PC-3 (cell line): ENCODE measurements at regions of chr1 and their contacts with region 1.

Region 1: GRCh38 chr1:156751758-156752757 is 583 bp upstream of the HDGF start:
- DNase-seq: peak; percentile 98
- ATAC-seq: peak; percentile 53
- H3K4me3 ChIP-seq: peak overlapping the region; percentile 86
- H3K27ac ChIP-seq: peak overlapping the region; percentile 60
- H3K4me1 ChIP-seq: peaks cover 41% of the 10 kb centered on the region
- H3K27me3 ChIP-seq: no peaks in the 10 kb centered on the region
- CTCF ChIP-seq: no peak

Region 2: GRCh38 chr1:156524481-156524869 is 227.6 kb before region 1 on chr1:
- CTCF ChIA-PET with region 1: no interaction called
- POLR2A ChIA-PET with region 1: interaction called, 12 read pairs
- intact Hi-C with region 1: no loop called
- DNase-seq: no peak
- ATAC-seq: no peak
- H3K4me3 ChIP-seq: no peak overlapping the region
- H3K27ac ChIP-seq: no peak overlapping the region
- H3K4me1 ChIP-seq: no peaks in the 10 kb centered on the region
- H3K27me3 ChIP-seq: no peaks in the 10 kb centered on the region
- CTCF ChIP-seq: no peak

Region 3: GRCh38 chr1:156767101-156767878 is 15.2 kb after region 1 on chr1 and contains the start of gene PRCC:
- CTCF ChIA-PET with region 1: no interaction called
- POLR2A ChIA-PET with region 1: interaction called, 7 read pairs
- intact Hi-C with region 1: loop called (anchors 1 kb)
- DNase-seq: peak; percentile 100
- ATAC-seq: peak; percentile 93
- H3K4me3 ChIP-seq: peak within 1 kb of the TSS; percentile 74
- H3K27ac ChIP-seq: peak within 1 kb of the TSS; percentile 74
- H3K4me1 ChIP-seq: peaks cover 31% of the 10 kb centered on the region
- H3K27me3 ChIP-seq: no peaks in the 10 kb centered on the region
- CTCF ChIP-seq: no peak
- total RNA-seq, gene PRCC: 103 TPM in 2 replicates